Activated CD8-positive, alpha-beta T cell treated with anti-CD3 and anti-CD28 coated beads, Interleukin-2, amount 10 ng/mL, durations not matched to agents 7 days and 5 days (primary cell): ENCODE measurements at regions of chr22 and their contacts with region 1.

Region 1: GRCh38 chr22:39927544-39927943 is 26.7 kb downstream of the GRAP2 start:
- DNase-seq: peak; percentile 65
- ATAC-seq: peak; percentile 31
- H3K4me3 Mint-ChIP-seq: no peak overlapping the region
- H3K27ac Mint-ChIP-seq: no peak overlapping the region
- H3K4me1 Mint-ChIP-seq: peaks cover 34% of the 10 kb centered on the region
- H3K27me3 Mint-ChIP-seq: no peaks in the 10 kb centered on the region

Region 2: GRCh38 chr22:39900306-39901227 is 27.0 kb before region 1 on chr22 and contains the start of gene GRAP2:
- CTCF ChIA-PET with region 1: interaction called, 242 read pairs
- POLR2A ChIA-PET with region 1: interaction called, 412 read pairs
- DNase-seq: peak; percentile 90
- ATAC-seq: peak; percentile 95
- H3K4me3 Mint-ChIP-seq: peak within 1 kb of the TSS; percentile 95
- H3K27ac Mint-ChIP-seq: peak within 1 kb of the TSS; percentile 96
- H3K4me1 Mint-ChIP-seq: peaks cover 17% of the 10 kb centered on the region
- H3K27me3 Mint-ChIP-seq: no peaks in the 10 kb centered on the region
- total RNA-seq, gene GRAP2: 235 to 239 TPM

Region 3: DNA sequence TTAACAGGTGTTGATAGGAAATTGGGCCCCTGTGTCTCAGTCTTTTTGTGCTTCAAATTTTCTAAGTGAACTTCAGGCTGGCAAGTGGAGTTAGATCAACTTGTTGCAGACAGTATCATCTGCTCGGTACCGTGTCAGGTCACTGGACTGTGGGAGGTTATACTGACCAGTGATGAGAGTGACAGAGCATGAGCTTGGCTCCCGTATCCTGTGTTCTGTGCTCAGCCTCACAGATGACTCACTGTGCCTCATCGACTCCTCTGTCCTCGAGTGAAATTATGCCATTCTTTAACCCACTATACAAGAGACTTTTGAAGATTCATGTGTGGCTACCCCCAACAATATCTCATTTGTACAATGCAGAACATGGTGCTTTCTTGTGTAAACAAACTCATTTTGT is 18.8 kb before region 1 on chr22:
- CTCF ChIA-PET with region 1: interaction called, 242 read pairs
- POLR2A ChIA-PET with region 1: interaction called, 412 read pairs
- DNase-seq: peak; percentile 60
- ATAC-seq: peak; percentile 34
- H3K4me3 Mint-ChIP-seq: peak overlapping the region; percentile 95
- H3K27ac Mint-ChIP-seq: peak overlapping the region; percentile 97
- H3K4me1 Mint-ChIP-seq: peaks cover 72% of the 10 kb centered on the region
- H3K27me3 Mint-ChIP-seq: no peaks in the 10 kb centered on the region

Region 4: DNA sequence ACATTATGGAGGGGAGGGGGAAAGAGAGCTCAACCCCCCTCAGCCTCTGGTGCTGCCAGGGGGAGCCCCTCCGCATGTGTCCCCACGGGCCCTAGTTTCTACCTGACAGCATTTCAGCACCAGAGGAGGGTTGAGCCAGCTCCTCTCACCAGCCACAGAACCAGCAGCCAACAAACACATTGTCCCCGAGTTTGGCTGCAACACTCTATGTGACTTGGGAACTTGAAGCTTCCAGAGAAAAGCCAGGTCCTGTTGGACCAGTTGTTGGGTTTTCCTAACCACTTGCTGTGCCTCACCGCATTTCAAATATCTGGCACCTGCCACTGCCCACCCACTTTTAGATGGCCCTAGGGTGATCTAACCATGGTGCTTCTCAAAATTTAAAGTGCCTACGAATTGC is 46.1 kb after region 1 on chr22:
- CTCF ChIA-PET with region 1: no interaction called
- POLR2A ChIA-PET with region 1: no interaction called
- DNase-seq: no peak
- ATAC-seq: no peak
- H3K4me3 Mint-ChIP-seq: no peak overlapping the region
- H3K27ac Mint-ChIP-seq: no peak overlapping the region
- H3K4me1 Mint-ChIP-seq: peaks cover 10% of the 10 kb centered on the region
- H3K27me3 Mint-ChIP-seq: no peaks in the 10 kb centered on the region

Region 5: GRCh38 chr22:40094485-40094884 is 166.9 kb after region 1 on chr22:
- CTCF ChIA-PET with region 1: no interaction called
- POLR2A ChIA-PET with region 1: no interaction called
- DNase-seq: peak; percentile 26
- ATAC-seq: peak; percentile 81
- H3K4me3 Mint-ChIP-seq: peak overlapping the region; percentile 70
- H3K27ac Mint-ChIP-seq: peak overlapping the region; percentile 84
- H3K4me1 Mint-ChIP-seq: peaks cover 55% of the 10 kb centered on the region
- H3K27me3 Mint-ChIP-seq: no peaks in the 10 kb centered on the region

Region 6: GRCh38 chr22:40415531-40416266 is 488.2 kb after region 1 on chr22:
- CTCF ChIA-PET with region 1: no interaction called
- POLR2A ChIA-PET with region 1: no interaction called
- DNase-seq: peak; percentile 53
- ATAC-seq: peak; percentile 48
- H3K4me3 Mint-ChIP-seq: no peak overlapping the region
- H3K27ac Mint-ChIP-seq: peak overlapping the region; percentile 89
- H3K4me1 Mint-ChIP-seq: peaks cover 44% of the 10 kb centered on the region
- H3K27me3 Mint-ChIP-seq: no peaks in the 10 kb centered on the region